ENCODE measurements at regions of chr18 and their contacts with region 1.

Region 1: DNA sequence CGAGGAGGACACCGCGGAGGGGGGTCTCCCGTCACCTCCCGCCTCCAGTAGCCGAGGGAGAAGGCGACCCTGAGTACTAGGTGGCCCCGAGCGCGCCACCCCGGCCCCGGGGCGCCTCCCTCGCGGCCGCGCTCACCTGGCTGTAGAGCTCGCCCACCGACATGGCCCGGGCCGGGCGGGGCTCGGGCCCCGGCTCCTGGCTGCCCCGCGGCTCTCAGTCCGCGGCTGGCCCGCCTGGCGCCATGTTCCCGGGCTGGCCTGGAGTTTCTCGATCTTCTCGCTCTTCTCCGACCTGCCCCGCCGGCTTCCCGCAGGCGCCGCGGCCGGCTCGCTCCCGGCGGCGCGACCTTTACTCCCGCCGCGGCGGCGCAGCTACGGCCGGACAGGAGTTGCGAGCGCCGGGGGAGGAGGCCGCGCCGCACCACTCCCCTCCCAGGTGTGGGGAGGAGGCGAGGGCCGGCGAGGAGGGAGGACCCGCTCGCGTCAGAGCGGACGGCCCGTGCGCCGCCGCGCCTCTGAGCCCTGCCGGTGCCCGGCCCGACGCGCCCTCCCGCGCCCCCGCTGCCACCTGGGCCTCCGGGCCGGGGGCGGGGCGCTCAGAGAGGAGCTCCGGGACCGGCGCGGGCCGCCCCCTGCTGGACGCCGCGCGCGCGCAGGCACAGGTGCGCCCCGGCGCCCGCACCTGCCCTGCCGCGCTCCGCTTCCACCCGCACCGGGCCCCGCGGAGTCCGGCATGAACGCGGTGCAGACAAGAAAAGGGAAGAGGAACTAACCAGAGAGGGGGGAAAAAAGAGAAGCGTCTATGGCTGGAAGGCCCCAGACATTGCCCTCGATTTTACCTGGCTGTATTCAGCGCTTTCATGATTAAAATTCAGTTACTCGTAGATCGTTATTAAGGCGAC is at the start of gene MYO5B:
- DNase-seq: no peak
- ATAC-seq: peak; percentile 84
- H3K4me3 ChIP-seq: peak within 1 kb of the TSS; percentile 57; the same call in 1 of the 2 replicates
- H3K27ac ChIP-seq: no peak within 1 kb of the TSS
- H3K4me1 ChIP-seq: no peaks in the 10 kb centered on the region
- H3K27me3 ChIP-seq: peaks cover 6 to 10% of the 10 kb centered on the region in 2 experiments; a peak in 3 of 4 replicates
- CTCF ChIP-seq: peak; percentile 32 to 52 (median 39); a peak in 5 of 6 replicates
- EP300 ChIP-seq: no peak
- POLR2A ChIP-seq: no peak
- RAD21 ChIP-seq: peak; percentile 61
- polyA plus RNA-seq, gene MYO5B: 2.8 to 4.4 TPM

Region 2: DNA sequence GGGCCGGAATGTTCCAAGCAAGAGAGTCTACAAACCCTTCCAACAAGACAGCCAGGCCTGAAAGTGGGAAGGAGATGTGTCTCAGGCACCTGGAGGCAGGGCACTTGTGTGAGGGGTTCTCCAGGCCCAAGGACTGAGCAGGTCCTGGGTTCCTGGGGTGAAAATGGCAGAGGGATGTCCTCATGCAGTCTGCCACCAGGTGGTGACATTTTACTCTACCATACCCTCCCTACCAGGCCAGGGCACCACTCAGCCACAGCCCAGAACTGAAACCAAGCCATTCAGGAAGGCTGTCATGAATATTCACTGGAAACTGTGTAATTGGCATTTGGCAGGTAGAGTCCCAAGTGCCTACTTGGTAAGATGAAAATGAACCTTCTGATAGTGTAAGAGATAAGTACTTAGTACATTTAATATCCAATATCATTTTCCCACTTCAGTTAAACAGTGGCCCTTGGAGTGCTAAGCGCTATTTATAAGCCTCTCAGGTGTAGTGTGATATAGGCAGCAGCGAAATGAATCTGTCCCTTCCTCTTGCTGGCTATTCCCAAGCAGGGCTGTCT is 185.0 kb before region 1 on chr18:
- CTCF ChIA-PET with region 1: interaction called, 13 read pairs
- POLR2A ChIA-PET with region 1: interaction called, 3 read pairs
- RAD21 ChIA-PET with region 1: interaction called, 6 read pairs
- SMC1A ChIA-PET with region 1: interaction called, 22 read pairs
- in situ Hi-C with region 1: no loop called
- intact Hi-C with region 1: loop called (anchors 2 kb)
- DNase-seq: peak; percentile 25
- ATAC-seq: peak; percentile 99
- H3K4me3 ChIP-seq: no peak overlapping the region
- H3K27ac ChIP-seq: no peak overlapping the region
- H3K4me1 ChIP-seq: no peaks in the 10 kb centered on the region
- H3K27me3 ChIP-seq: no peaks in the 10 kb centered on the region
- CTCF ChIP-seq: peak; percentile 69 to 73 (median 72); a peak in 5 of 6 replicates
- EP300 ChIP-seq: no peak
- POLR2A ChIP-seq: no peak
- RAD21 ChIP-seq: peak; percentile 63

Region 3: DNA sequence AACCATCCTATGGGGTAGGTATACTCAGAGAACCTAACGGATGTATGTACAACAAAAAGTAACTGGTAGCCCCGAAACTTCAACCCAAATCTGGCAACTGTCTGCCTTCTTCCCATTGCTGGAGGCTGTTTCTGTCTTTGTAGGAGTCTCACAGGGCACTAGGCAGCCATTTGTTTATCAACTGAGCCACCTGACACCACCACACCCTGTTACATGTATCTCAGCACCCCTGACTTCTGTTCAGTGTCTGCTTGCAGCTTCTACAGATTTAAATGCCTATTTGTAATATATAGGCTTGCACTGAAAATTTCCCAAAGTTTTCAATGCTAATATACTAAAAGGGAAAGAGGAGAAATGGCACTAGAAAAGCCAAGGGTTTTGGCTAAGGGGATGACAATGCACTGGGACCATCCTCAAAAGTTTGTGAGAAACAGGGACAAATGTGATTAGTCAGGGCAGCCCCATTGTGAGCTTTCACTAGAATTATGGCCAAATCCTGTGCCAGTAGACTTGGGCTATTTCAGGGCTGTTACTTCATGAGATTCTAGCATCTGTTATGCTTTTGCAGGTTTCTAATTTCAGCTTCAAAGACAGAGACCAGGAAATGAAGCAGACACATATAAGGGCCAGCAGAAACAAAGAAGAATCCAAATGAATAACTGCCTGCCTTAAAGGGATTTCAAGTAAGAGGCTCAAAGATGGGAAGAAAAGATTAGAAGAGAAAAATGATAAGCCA is 103.2 kb before region 1 on chr18:
- CTCF ChIA-PET with region 1: no interaction called
- POLR2A ChIA-PET with region 1: interaction called, 4 read pairs
- RAD21 ChIA-PET with region 1: interaction called, 12 read pairs
- SMC1A ChIA-PET with region 1: interaction called, 3 read pairs
- in situ Hi-C with region 1: no loop called
- intact Hi-C with region 1: loop called (anchors 5 kb)
- DNase-seq: no peak
- ATAC-seq: no peak
- H3K4me3 ChIP-seq: no peak overlapping the region
- H3K27ac ChIP-seq: no peak overlapping the region
- H3K4me1 ChIP-seq: no peaks in the 10 kb centered on the region
- H3K27me3 ChIP-seq: peaks cover 0 to 2% of the 10 kb centered on the region in 2 experiments; a peak in 1 of 4 replicates
- CTCF ChIP-seq: no peak
- EP300 ChIP-seq: no peak
- POLR2A ChIP-seq: no peak
- RAD21 ChIP-seq: no peak

Region 4: GRCh38 chr18:50111265-50111792 is 83.6 kb before region 1 on chr18:
- CTCF ChIA-PET with region 1: interaction called, 32 read pairs
- POLR2A ChIA-PET with region 1: no interaction called
- RAD21 ChIA-PET with region 1: interaction called, 10 read pairs
- SMC1A ChIA-PET with region 1: interaction called, 24 read pairs
- in situ Hi-C with region 1: no loop called
- intact Hi-C with region 1: loop called (anchors 1 kb)
- DNase-seq: no peak
- ATAC-seq: peak; percentile 52; the same call in 2 of the 3 replicates
- H3K4me3 ChIP-seq: no peak overlapping the region
- H3K27ac ChIP-seq: no peak overlapping the region
- H3K4me1 ChIP-seq: no peaks in the 10 kb centered on the region
- H3K27me3 ChIP-seq: peaks cover 0 to 12% of the 10 kb centered on the region in 2 experiments; a peak in 2 of 4 replicates
- CTCF ChIP-seq: peak; percentile 7 to 52 (median 21); a peak in 4 of 6 replicates
- EP300 ChIP-seq: no peak
- POLR2A ChIP-seq: no peak
- RAD21 ChIP-seq: peak; percentile 63

Region 5: GRCh38 chr18:50138181-50139064 is 56.5 kb before region 1 on chr18:
- CTCF ChIA-PET with region 1: interaction called, 4 read pairs
- POLR2A ChIA-PET with region 1: interaction called, 4 read pairs
- RAD21 ChIA-PET with region 1: interaction called, 13 read pairs
- SMC1A ChIA-PET with region 1: interaction called, 70 read pairs
- in situ Hi-C with region 1: no loop called
- intact Hi-C with region 1: no loop called
- DNase-seq: no peak
- ATAC-seq: no peak
- H3K4me3 ChIP-seq: no peak overlapping the region
- H3K27ac ChIP-seq: no peak overlapping the region
- H3K4me1 ChIP-seq: no peaks in the 10 kb centered on the region
- H3K27me3 ChIP-seq: no peaks in the 10 kb centered on the region; a peak in 1 of 4 replicates
- CTCF ChIP-seq: no peak
- EP300 ChIP-seq: no peak
- POLR2A ChIP-seq: no peak
- RAD21 ChIP-seq: no peak

Region 6: DNA sequence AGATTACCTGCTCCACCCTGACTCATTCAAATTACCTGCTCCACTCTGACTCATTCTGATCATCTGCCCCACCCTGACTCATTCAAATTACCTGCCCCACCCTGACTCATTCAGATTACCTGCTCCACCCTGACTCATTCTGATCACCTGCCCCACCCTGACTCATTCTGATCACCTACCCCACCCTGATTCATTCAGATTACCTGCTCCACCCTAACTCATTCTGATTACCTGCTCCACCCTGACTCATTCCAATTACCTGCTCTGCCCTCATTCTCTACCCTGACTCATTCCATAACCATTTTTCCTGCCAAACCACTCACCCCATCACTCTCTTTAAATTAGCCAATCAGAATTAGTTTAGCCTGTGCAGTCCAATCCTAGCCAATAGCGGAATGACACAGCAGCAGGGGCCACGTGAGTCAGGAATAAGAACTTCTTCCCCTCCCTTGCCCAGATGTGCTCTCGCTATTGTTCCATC is 45.2 kb after region 1 on chr18:
- CTCF ChIA-PET with region 1: no interaction called
- POLR2A ChIA-PET with region 1: no interaction called
- RAD21 ChIA-PET with region 1: no interaction called
- SMC1A ChIA-PET with region 1: no interaction called
- in situ Hi-C with region 1: no loop called
- intact Hi-C with region 1: no loop called
- DNase-seq: no peak
- ATAC-seq: no peak
- H3K4me3 ChIP-seq: no peak overlapping the region
- H3K27ac ChIP-seq: no peak overlapping the region
- H3K4me1 ChIP-seq: no peaks in the 10 kb centered on the region
- H3K27me3 ChIP-seq: no peaks in the 10 kb centered on the region
- CTCF ChIP-seq: no peak
- EP300 ChIP-seq: no peak
- POLR2A ChIP-seq: no peak
- RAD21 ChIP-seq: no peak